OCI-LY7 (cell line): ENCODE measurements at regions of chr6 and their contacts with region 1.

Region 1: DNA sequence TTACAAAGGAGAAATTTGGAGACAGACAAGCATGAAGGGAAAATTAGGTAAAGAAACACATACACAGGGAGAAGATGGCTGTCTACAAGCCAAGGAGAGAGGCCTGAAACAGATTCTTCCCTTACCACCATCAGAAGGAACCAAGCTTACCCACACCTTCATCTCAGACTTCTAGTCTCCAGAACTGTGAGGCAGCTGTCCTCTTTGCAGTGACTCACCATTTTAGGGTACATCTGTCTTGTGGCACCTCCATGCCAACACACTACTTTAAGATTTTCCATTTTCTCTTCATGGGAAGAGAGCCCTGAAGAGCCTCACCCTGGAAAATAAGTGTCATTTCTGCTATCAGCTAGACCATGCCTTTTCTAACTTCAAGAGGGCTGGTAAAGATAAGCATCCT is 369.3 kb downstream of the FRK start:
- DNase-seq: no peak
- H3K4me3 ChIP-seq: no peak overlapping the region
- H3K27ac ChIP-seq: no peak overlapping the region
- H3K4me1 ChIP-seq: no peaks in the 10 kb centered on the region
- CTCF ChIP-seq: no peak

Region 2: GRCh38 chr6:115441651-115442050 is 249.8 kb before region 1 on chr6:
- CTCF ChIA-PET with region 1: no interaction called
- POLR2A ChIA-PET with region 1: no interaction called
- intact Hi-C with region 1: no loop called
- DNase-seq: no peak
- H3K4me3 ChIP-seq: no peak overlapping the region
- H3K27ac ChIP-seq: no peak overlapping the region
- H3K4me1 ChIP-seq: no peaks in the 10 kb centered on the region
- CTCF ChIP-seq: no peak

Region 3: GRCh38 chr6:115668781-115669180 is 22.7 kb before region 1 on chr6:
- CTCF ChIA-PET with region 1: no interaction called
- POLR2A ChIA-PET with region 1: interaction called, 10 read pairs
- intact Hi-C with region 1: no loop called
- DNase-seq: no peak
- H3K4me3 ChIP-seq: no peak overlapping the region
- H3K27ac ChIP-seq: no peak overlapping the region
- H3K4me1 ChIP-seq: no peaks in the 10 kb centered on the region
- CTCF ChIP-seq: no peak

Region 4: DNA sequence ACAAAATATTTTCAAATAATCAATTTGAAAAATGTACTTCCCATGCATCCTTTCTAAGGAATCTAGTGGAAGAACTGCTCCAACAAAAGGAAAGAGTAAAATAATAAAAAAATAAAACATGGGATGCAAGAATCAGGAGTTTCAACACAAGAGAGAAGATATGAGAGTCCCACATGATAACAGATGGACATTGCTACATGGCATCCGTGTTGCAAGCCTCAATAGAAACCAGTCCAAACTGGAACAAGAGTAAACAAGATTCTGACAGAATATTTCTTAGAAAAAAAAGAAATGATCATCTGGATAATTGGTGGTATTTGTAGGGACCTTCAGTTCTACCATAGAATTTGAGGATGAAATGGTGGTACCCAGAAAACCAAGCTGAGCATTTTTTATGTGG is 182.5 kb after region 1 on chr6:
- CTCF ChIA-PET with region 1: no interaction called
- POLR2A ChIA-PET with region 1: no interaction called
- intact Hi-C with region 1: no loop called
- DNase-seq: no peak
- H3K4me3 ChIP-seq: no peak overlapping the region
- H3K27ac ChIP-seq: no peak overlapping the region
- H3K4me1 ChIP-seq: no peaks in the 10 kb centered on the region
- CTCF ChIP-seq: no peak